ENCODE measurements at regions of chr7 and their contacts with region 1.

Region 1: DNA sequence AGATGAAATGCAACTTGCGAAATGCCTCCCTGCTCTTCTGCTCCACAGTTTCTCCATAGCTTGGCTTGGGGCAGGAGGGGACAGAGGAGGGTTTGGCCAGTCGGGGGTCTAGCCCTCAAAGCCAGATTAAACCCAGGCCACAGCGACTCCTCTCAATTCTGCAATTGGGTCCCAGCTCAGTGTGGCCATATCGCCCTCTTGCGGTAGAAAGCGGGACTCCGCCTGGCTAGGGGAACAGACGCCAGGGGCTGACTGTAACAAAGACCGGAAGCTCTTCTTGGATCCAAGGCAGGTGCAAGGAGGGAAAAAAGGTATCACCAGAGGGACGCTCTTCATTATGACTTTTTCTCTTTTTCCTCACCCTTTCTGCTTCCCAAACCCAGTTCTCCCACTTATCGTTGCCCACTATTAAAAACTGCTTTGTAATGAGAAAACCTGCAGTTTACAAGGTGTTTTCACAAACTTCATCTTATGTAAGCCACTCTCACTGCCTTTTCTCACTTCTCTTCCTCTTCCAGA is 36.6 kb upstream of the TNPO3 start:
- DNase-seq: peak; percentile 78
- H3K4me3 ChIP-seq: no peak overlapping the region
- H3K27ac ChIP-seq: no peak overlapping the region
- H3K4me1 ChIP-seq: no peaks in the 10 kb centered on the region
- H3K27me3 ChIP-seq: peaks cover 0 to 11% of the 10 kb centered on the region in 2 donors
- CTCF ChIP-seq: peak; percentile 80 to 91

Region 2: GRCh38 chr7:128904381-128905197 is 187.0 kb before region 1 on chr7:
- intact Hi-C with region 1: loop called (anchors 10 kb)
- DNase-seq: peak; percentile 10 to 52
- H3K4me3 ChIP-seq: no peak overlapping the region
- H3K27ac ChIP-seq: no peak overlapping the region
- H3K4me1 ChIP-seq: peaks cover 0 to 7% (median under 1%) of the 10 kb centered on the region in 4 donors
- H3K27me3 ChIP-seq: peaks cover 0 to 42% of the 10 kb centered on the region in 2 donors
- CTCF ChIP-seq: peak; percentile 40 to 48